Tibial artery (tissue), 4 donors: ENCODE measurements at regions of chrX and their contacts with region 1.

Region 1: GRCh38 chrX:129957241-129958082 is 25.0 kb upstream of the BCORL1 start:
- DNase-seq: peak; percentile 38 to 71
- H3K4me3 ChIP-seq: peak overlapping the region; percentile 42 to 56
- H3K27ac ChIP-seq: peak overlapping the region; percentile 37 to 44
- H3K4me1 ChIP-seq: peaks cover 0 to 14% (median 6%) of the 10 kb centered on the region in 4 donors
- H3K27me3 ChIP-seq: no peaks in the 10 kb centered on the region
- CTCF ChIP-seq: no peak

Region 2: GRCh38 chrX:129347291-129347690 is 610.2 kb before region 1 on chrX:
- intact Hi-C with region 1: loop called (anchors 5 kb)
- DNase-seq: no peak
- H3K4me3 ChIP-seq: no peak overlapping the region
- H3K27ac ChIP-seq: no peak overlapping the region
- H3K4me1 ChIP-seq: no peaks in the 10 kb centered on the region
- H3K27me3 ChIP-seq: no peaks in the 10 kb centered on the region
- CTCF ChIP-seq: no peak

Region 3: GRCh38 chrX:129798888-129799287 is 158.6 kb before region 1 on chrX:
- intact Hi-C with region 1: no loop called
- DNase-seq: no peak
- H3K4me3 ChIP-seq: no peak overlapping the region
- H3K27ac ChIP-seq: no peak overlapping the region
- H3K4me1 ChIP-seq: no peaks in the 10 kb centered on the region
- H3K27me3 ChIP-seq: no peaks in the 10 kb centered on the region
- CTCF ChIP-seq: no peak